Heart left ventricle (tissue), 16 donors: ENCODE measurements at regions of chr10 and their contacts with region 1.

Region 1: GRCh38 chr10:33125522-33126517 is 167.8 kb upstream of the ITGB1 start:
- DNase-seq: peak in 3 of 5 donors; percentile 26 to 54 (median 28)
- ATAC-seq: peak; percentile 24 to 56 (median 42)
- H3K4me3 ChIP-seq: no peak overlapping the region
- H3K27ac ChIP-seq: peak overlapping the region in 11 of 12 donors; percentile 21 to 85 (median 55)
- H3K4me1 ChIP-seq: peaks cover 0 to 52% (median 22%) of the 10 kb centered on the region in 12 donors
- H3K27me3 ChIP-seq: no peaks in the 10 kb centered on the region
- CTCF ChIP-seq: no peak
- POLR2A ChIP-seq: no peak

Region 2: DNA sequence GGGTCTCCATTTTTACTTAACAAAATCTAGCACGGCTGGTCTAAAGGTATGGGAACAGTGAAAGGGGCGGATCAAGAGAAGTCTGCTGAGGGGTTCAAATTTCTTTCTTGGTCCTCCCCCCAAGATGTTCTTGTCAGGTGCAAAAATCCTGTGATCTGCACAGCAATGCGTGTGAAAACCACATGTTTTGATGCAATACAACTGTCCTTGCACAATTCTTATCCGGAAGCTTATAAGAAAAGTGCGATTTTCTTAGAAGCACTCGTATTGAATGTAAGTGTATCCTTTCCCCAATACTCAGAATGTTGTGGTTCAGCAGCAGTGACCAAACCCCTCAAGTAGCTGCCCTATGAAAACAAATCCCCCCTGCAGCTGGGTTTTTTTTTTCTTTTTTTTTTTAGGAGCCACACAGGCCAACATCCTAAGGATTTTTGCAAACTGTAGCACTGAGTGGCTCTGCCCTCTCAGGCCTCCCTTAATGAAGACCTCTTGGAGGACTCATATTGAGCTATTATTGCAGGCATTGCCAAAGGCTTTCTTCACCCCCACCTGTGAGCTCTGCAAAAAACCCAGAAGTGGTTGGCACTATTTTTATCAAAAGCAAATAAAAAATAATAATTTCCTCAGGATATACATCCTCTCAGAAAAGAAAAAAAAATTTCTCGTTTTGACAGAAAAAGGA is 15.9 kb before region 1 on chr10:
- intact Hi-C with region 1: loop called in 1 of 10 experiments (anchors 2 kb)
- DNase-seq: no peak
- ATAC-seq: no peak
- H3K4me3 ChIP-seq: no peak overlapping the region
- H3K27ac ChIP-seq: peak overlapping the region in 8 of 12 donors; percentile 21 to 80 (median 48)
- H3K4me1 ChIP-seq: peaks cover 0 to 49% (median 9%) of the 10 kb centered on the region in 12 donors
- H3K27me3 ChIP-seq: no peaks in the 10 kb centered on the region
- CTCF ChIP-seq: no peak
- POLR2A ChIP-seq: no peak

Region 3: DNA sequence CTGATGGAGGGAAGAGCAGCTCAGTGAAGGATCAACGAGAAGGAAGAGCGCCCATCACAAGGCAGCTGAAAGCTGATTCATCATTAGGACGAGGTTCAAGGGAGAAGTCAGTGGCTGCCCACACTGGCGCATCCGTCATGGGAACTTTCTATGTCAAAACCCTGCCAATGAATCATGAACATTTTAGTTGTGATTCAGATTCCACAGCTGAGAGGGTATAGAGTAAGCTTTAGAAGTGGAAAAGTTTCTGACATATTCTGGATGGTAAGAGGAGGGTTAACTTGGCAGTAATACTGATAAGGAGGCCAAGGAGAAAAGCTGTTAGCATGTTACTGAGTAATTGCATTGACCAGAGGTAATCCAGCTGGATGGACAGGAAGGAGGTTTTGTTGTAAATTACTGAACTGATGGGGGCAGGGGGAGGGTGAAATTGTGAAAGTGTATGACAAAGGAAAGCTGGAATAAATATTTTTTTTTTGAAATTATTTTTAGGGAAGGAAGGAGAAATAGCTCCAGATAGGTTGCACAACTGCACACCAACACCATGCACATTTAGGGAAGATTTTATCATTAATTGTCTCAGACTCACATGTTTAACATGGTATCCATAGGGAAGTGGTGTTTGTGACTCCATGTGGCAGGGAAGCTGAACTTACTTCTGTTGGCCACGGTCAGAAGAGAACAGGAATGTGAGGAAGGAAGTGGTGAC is 287.0 kb after region 1 on chr10:
- intact Hi-C with region 1: no loop called
- DNase-seq: peak in 2 of 5 donors; percentile 27 to 64
- ATAC-seq: peak in 3 of 4 donors; percentile 64 to 86 (median 77)
- H3K4me3 ChIP-seq: no peak overlapping the region
- H3K27ac ChIP-seq: peak overlapping the region in 2 of 12 donors; percentile 48 to 69
- H3K4me1 ChIP-seq: peaks cover 0 to 18% (median 0%) of the 10 kb centered on the region in 12 donors
- H3K27me3 ChIP-seq: no peaks in the 10 kb centered on the region
- CTCF ChIP-seq: no peak
- POLR2A ChIP-seq: no peak